ENCODE measurements at regions of chr4 and their contacts with region 1.

Region 1: GRCh38 chr4:24419181-24420034 is 164.9 kb downstream of the DHX15 start:
- DNase-seq: peak; percentile 85
- H3K4me3 Mint-ChIP-seq: no peak overlapping the region
- H3K27ac Mint-ChIP-seq: peak overlapping the region; percentile 36
- H3K4me1 Mint-ChIP-seq: peaks cover 16% of the 10 kb centered on the region
- H3K27me3 Mint-ChIP-seq: no peaks in the 10 kb centered on the region
- CTCF ChIP-seq: peak; percentile 90

Region 2: GRCh38 chr4:23368081-23368697 is 1051.2 kb before region 1 on chr4:
- CTCF ChIA-PET with region 1: interaction called, 5 read pairs
- POLR2A ChIA-PET with region 1: no interaction called
- intact Hi-C with region 1: loop called (anchors 1 kb)
- DNase-seq: peak; percentile 65
- H3K4me3 Mint-ChIP-seq: no peak overlapping the region
- H3K27ac Mint-ChIP-seq: no peak overlapping the region
- H3K4me1 Mint-ChIP-seq: peaks cover under 1% of the 10 kb centered on the region
- H3K27me3 Mint-ChIP-seq: no peaks in the 10 kb centered on the region
- CTCF ChIP-seq: peak; percentile 33

Region 3: DNA sequence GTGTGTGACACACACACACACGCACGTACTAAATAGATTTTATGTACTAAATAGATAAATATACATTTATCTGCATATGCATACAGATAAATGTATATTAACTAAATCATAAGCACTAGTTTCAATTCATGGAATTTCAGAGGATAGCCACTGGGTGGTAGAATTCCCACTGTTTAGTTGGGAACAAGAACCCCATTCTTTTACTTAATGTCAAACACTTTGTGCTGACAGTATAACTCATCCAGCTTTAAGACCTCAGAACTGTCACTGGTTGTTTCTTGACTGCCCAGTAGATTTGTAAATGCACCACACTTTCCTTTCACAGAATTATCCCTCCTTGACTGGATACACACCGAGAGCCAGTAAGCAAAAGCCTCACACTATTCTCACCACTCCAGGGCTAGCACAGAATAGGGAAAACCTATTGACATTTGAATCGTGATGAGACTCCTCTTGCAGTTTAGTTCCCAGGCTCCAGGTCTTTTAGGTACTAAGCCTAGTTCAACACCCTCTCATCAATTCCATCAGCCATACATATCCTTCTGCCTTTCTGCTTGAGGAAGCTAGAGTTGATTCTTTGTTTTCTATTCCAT is 561.9 kb before region 1 on chr4:
- CTCF ChIA-PET with region 1: interaction called, 16 read pairs
- POLR2A ChIA-PET with region 1: interaction called, 3 read pairs
- intact Hi-C with region 1: loop called (anchors 1 kb)
- DNase-seq: peak; percentile 24
- H3K4me3 Mint-ChIP-seq: no peak overlapping the region
- H3K27ac Mint-ChIP-seq: no peak overlapping the region
- H3K4me1 Mint-ChIP-seq: peaks cover 13% of the 10 kb centered on the region
- H3K27me3 Mint-ChIP-seq: no peaks in the 10 kb centered on the region
- CTCF ChIP-seq: no peak

Region 4: GRCh38 chr4:24089851-24090534 is 329.4 kb before region 1 on chr4:
- CTCF ChIA-PET with region 1: no interaction called
- POLR2A ChIA-PET with region 1: no interaction called
- intact Hi-C with region 1: loop called (anchors 5 kb)
- DNase-seq: peak; percentile 44
- H3K4me3 Mint-ChIP-seq: no peak overlapping the region
- H3K27ac Mint-ChIP-seq: peak overlapping the region; percentile 76
- H3K4me1 Mint-ChIP-seq: peaks cover 12% of the 10 kb centered on the region
- H3K27me3 Mint-ChIP-seq: no peaks in the 10 kb centered on the region
- CTCF ChIP-seq: no peak

Region 5: DNA sequence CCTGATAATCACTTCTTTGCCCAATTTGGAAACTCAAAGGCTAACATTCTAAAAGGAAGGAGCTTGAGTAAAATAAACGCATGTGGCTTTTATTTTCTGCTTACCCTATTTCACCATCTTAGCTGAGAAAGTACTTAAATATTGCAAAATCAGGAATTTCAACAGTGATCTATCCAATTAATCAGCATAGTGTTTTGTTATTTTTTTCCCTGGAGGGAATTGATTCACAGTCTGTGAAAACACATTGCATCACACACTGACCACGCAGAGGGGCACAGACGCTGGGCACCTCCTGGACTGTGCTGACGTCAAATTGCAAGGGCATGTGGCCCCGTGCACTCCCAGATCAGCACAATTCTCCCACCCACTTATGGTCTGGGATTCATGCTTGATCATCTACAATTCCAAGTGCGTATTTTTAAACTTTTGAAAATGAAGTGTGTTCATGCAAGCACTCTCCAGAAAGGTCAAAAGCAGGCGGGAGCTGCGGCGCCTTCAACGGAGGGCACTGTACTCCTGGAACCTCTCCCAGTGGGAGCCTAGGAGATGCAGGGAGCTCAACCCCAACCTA is 209.0 kb before region 1 on chr4:
- CTCF ChIA-PET with region 1: interaction called, 13 read pairs
- POLR2A ChIA-PET with region 1: interaction called, 15 read pairs
- intact Hi-C with region 1: loop called (anchors 2 kb)
- DNase-seq: peak; percentile 98
- H3K4me3 Mint-ChIP-seq: peak overlapping the region; percentile 18
- H3K27ac Mint-ChIP-seq: peak overlapping the region; percentile 85
- H3K4me1 Mint-ChIP-seq: peaks cover 36% of the 10 kb centered on the region
- H3K27me3 Mint-ChIP-seq: no peaks in the 10 kb centered on the region
- CTCF ChIP-seq: no peak

Region 6: GRCh38 chr4:24468071-24468470 is 48.7 kb after region 1 on chr4:
- CTCF ChIA-PET with region 1: no interaction called
- POLR2A ChIA-PET with region 1: no interaction called
- intact Hi-C with region 1: no loop called
- DNase-seq: no peak
- H3K4me3 Mint-ChIP-seq: no peak overlapping the region
- H3K27ac Mint-ChIP-seq: no peak overlapping the region
- H3K4me1 Mint-ChIP-seq: peaks cover 14% of the 10 kb centered on the region
- H3K27me3 Mint-ChIP-seq: peaks cover 21% of the 10 kb centered on the region
- CTCF ChIP-seq: no peak